ENCODE measurements at regions of chr3 and their contacts with region 1.

Region 1: GRCh38 chr3:40580494-40581091 is 55.8 kb downstream of the ZNF621 start:
- DNase-seq: peak; percentile 58 to 89
- H3K4me3 ChIP-seq: no peak overlapping the region
- CTCF ChIP-seq: no peak
- POLR2A ChIP-seq: no peak

Region 2: GRCh38 chr3:40317061-40317855 is 263.3 kb before region 1 on chr3:
- intact Hi-C with region 1: loop called (anchors 10 kb)
- DNase-seq: peak in 1 of 2 donors; percentile 36
- H3K4me3 ChIP-seq: no peak overlapping the region
- CTCF ChIP-seq: peak in 1 of 3 donors; percentile 70
- POLR2A ChIP-seq: no peak

Region 3: GRCh38 chr3:41199866-41200668 is 619.5 kb after region 1 on chr3:
- intact Hi-C with region 1: loop called (anchors 10 kb)
- DNase-seq: peak in 1 of 2 donors; percentile 24
- H3K4me3 ChIP-seq: peak overlapping the region; percentile 96
- CTCF ChIP-seq: no peak
- POLR2A ChIP-seq: no peak

Region 4: GRCh38 chr3:41881233-41881821 is 1300.7 kb after region 1 on chr3:
- intact Hi-C with region 1: loop called (anchors 5 kb)
- DNase-seq: peak in 1 of 2 donors; percentile 18
- H3K4me3 ChIP-seq: no peak overlapping the region
- CTCF ChIP-seq: peak in 1 of 3 donors; percentile 37
- POLR2A ChIP-seq: no peak